Lower leg skin (tissue), 4 donors: ENCODE measurements at regions of chr5 and their contacts with region 1.

Region 1: GRCh38 chr5:34898258-34898895 is 16.9 kb downstream of the RAD1 start:
- DNase-seq: peak in 1 of 2 donors; percentile 52
- H3K4me3 ChIP-seq: no peak overlapping the region
- CTCF ChIP-seq: peak in 1 of 3 donors; percentile 73
- POLR2A ChIP-seq: no peak

Region 2: GRCh38 chr5:34486160-34486848 is 412.1 kb before region 1 on chr5:
- intact Hi-C with region 1: loop called (anchors 5 kb)
- DNase-seq: peak; percentile 82 to 95
- H3K4me3 ChIP-seq: no peak overlapping the region
- CTCF ChIP-seq: peak in 1 of 3 donors; percentile 25
- POLR2A ChIP-seq: no peak

Region 3: GRCh38 chr5:34517249-34517648 is 381.1 kb before region 1 on chr5:
- intact Hi-C with region 1: loop called (anchors 5 kb)
- DNase-seq: no peak
- H3K4me3 ChIP-seq: no peak overlapping the region
- CTCF ChIP-seq: no peak
- POLR2A ChIP-seq: no peak

Region 4: DNA sequence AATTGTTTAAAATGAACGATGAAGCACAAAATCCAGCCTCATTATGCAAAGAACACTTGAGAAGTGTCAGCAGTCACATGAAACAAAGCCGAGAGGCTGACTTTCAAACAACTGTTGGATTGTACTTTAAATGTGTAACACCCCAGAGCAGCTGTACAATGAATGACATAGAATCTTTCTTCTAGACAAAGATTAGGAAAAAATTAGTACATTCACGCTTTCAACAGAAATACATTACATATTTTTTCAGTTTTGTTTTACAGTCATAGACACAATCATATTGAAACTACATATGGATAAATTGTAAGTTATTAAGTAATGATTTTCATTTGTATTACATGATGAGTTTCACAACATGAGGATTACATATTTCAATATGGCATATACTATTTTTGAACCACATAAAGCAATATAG is 160.0 kb after region 1 on chr5:
- intact Hi-C with region 1: no loop called
- DNase-seq: no peak
- H3K4me3 ChIP-seq: no peak overlapping the region
- CTCF ChIP-seq: no peak
- POLR2A ChIP-seq: no peak

Region 5: GRCh38 chr5:35436410-35437057 is 538.2 kb after region 1 on chr5:
- intact Hi-C with region 1: no loop called
- DNase-seq: no peak
- H3K4me3 ChIP-seq: no peak overlapping the region
- CTCF ChIP-seq: no peak
- POLR2A ChIP-seq: no peak